ENCODE measurements at regions of chr20 and their contacts with region 1.

Region 1: GRCh38 chr20:34704177-34705007 is at the start of gene TP53INP2:
- DNase-seq: peak; percentile 94 to 97 (median 97)
- ATAC-seq: peak; percentile 71 to 81 (median 78)
- H3K4me3 ChIP-seq: peak within 1 kb of the TSS; percentile 73 to 81 (median 73)
- H3K27ac ChIP-seq: peak within 1 kb of the TSS; percentile 98 to 100 (median 99)
- H3K4me1 ChIP-seq: peaks cover 0 to 34% (median 12%) of the 10 kb centered on the region in 4 donors
- H3K27me3 ChIP-seq: no peaks in the 10 kb centered on the region
- CTCF ChIP-seq: no peak
- POLR2A ChIP-seq: peak; percentile 91
- total RNA-seq, gene TP53INP2: 5.8 to 24.1 (median 12.7) TPM

Region 2: GRCh38 chr20:34538671-34539123 is 165.7 kb before region 1 on chr20:
- intact Hi-C with region 1: loop called (anchors 10 kb)
- DNase-seq: peak; percentile 64 to 85 (median 82)
- ATAC-seq: peak; percentile 90 to 97 (median 92)
- H3K4me3 ChIP-seq: no peak overlapping the region
- H3K27ac ChIP-seq: no peak overlapping the region
- H3K4me1 ChIP-seq: peaks cover 0 to 6% (median 2%) of the 10 kb centered on the region in 4 donors
- H3K27me3 ChIP-seq: no peaks in the 10 kb centered on the region
- CTCF ChIP-seq: peak; percentile 84 to 93 (median 86)
- POLR2A ChIP-seq: no peak

Region 3: DNA sequence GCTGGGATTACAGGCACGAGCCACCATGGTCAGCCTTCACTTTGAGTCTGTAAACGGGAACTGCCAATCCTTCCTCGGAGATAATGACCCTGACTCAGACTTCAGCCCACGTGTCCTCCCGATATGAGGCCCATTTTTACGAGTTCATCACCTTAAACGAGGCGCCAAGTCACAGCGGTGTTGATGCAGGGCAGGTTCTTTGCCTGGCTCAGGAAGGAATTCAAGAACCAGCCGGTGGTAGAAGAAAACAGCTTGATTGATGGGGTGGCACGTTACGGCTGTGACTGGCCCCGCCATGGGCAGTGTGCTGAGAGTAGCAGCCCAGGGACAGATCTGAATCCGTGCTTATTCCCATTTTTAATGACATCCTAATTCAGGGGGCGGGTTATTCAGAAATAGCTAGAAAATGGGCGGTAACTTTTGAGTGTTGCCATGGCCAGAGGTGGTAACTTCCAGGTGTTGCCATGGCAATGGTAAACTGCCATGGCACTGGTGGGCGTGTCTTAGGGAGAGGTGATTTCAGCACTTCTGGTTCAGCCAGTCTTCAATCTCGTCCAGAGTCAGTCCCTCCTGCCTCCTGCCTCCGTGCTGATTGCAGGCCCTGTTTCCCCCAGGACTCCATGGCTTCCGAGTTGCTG is 155.0 kb before region 1 on chr20:
- intact Hi-C with region 1: loop called in 1 of 2 experiments (anchors 10 kb)
- DNase-seq: no peak
- ATAC-seq: no peak
- H3K4me3 ChIP-seq: no peak overlapping the region
- H3K27ac ChIP-seq: no peak overlapping the region
- H3K4me1 ChIP-seq: peaks cover 0 to 13% (median 0%) of the 10 kb centered on the region in 4 donors
- H3K27me3 ChIP-seq: no peaks in the 10 kb centered on the region
- CTCF ChIP-seq: no peak
- POLR2A ChIP-seq: no peak

Measured in right lobe of liver (tissue), 6 donors.